ENCODE measurements at regions of chrX and their contacts with region 1.

Region 1: DNA sequence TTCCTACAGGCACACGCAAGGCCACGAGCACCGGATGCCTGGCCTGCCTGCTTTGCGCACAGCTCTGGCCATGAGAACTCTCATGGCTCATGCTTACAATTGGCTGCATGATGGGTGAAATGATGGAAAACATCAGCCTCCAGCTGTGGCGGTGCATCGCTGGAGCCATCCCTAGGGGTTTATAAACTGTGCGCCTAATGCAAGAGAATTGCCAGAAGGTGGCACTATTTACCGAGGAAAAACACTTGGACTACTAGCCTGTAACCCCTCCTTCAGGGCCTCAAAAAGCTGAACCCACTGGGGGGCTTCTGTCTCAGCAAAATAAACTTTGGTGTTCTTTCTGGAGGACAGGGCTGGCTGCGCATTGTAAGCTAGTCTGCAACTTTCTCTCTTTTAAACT is 51.9 kb downstream of the PHKA2 start:
- DNase-seq: peak; percentile 16
- H3K4me3 ChIP-seq: no peak overlapping the region
- H3K27ac ChIP-seq: no peak overlapping the region
- H3K4me1 ChIP-seq: no peaks in the 10 kb centered on the region
- H3K27me3 ChIP-seq: no peaks in the 10 kb centered on the region
- CTCF ChIP-seq: peak; percentile 23 to 35
- POLR2A ChIP-seq: no peak

Region 2: GRCh38 chrX:18537524-18537923 is 394.4 kb before region 1 on chrX:
- CTCF ChIA-PET with region 1: no interaction called
- POLR2A ChIA-PET with region 1: no interaction called
- dilution Hi-C with region 1: no loop called
- intact Hi-C with region 1: no loop called
- DNase-seq: no peak
- H3K4me3 ChIP-seq: no peak overlapping the region
- H3K27ac ChIP-seq: no peak overlapping the region
- H3K4me1 ChIP-seq: no peaks in the 10 kb centered on the region
- H3K27me3 ChIP-seq: no peaks in the 10 kb centered on the region
- CTCF ChIP-seq: no peak
- POLR2A ChIP-seq: no peak

Region 3: GRCh38 chrX:19017271-19017670 is 85.3 kb after region 1 on chrX:
- CTCF ChIA-PET with region 1: no interaction called
- POLR2A ChIA-PET with region 1: no interaction called
- dilution Hi-C with region 1: no loop called
- intact Hi-C with region 1: loop called (anchors 1 kb)
- DNase-seq: no peak
- H3K4me3 ChIP-seq: no peak overlapping the region
- H3K27ac ChIP-seq: no peak overlapping the region
- H3K4me1 ChIP-seq: no peaks in the 10 kb centered on the region
- H3K27me3 ChIP-seq: no peaks in the 10 kb centered on the region
- CTCF ChIP-seq: peak; percentile 13 to 22
- POLR2A ChIP-seq: no peak

Measured in endothelial cell of umbilical vein (primary cell).